ENCODE measurements at regions of chr7 and their contacts with region 1.

Region 1: GRCh38 chr7:23863209-23863798 is 153.3 kb downstream of the STK31 start:
- DNase-seq: peak; percentile 45
- ATAC-seq: peak; percentile 86
- H3K4me3 ChIP-seq: no peak overlapping the region
- H3K27ac ChIP-seq: no peak overlapping the region
- H3K4me1 ChIP-seq: no peaks in the 10 kb centered on the region
- H3K27me3 ChIP-seq: no peaks in the 10 kb centered on the region
- CTCF ChIP-seq: peak; percentile 65 to 82 (median 77); a peak in 5 of 6 replicates
- POLR2A ChIP-seq: no peak
- RAD21 ChIP-seq: peak; percentile 90

Region 2: GRCh38 chr7:23873306-23873705 is 10.0 kb after region 1 on chr7:
- CTCF ChIA-PET with region 1: interaction called, 10 read pairs
- POLR2A ChIA-PET with region 1: no interaction called
- RAD21 ChIA-PET with region 1: no interaction called
- intact Hi-C with region 1: no loop called
- DNase-seq: no peak
- ATAC-seq: no peak
- H3K4me3 ChIP-seq: no peak overlapping the region
- H3K27ac ChIP-seq: no peak overlapping the region
- H3K4me1 ChIP-seq: no peaks in the 10 kb centered on the region
- H3K27me3 ChIP-seq: no peaks in the 10 kb centered on the region
- CTCF ChIP-seq: no peak
- POLR2A ChIP-seq: no peak
- RAD21 ChIP-seq: no peak

Region 3: DNA sequence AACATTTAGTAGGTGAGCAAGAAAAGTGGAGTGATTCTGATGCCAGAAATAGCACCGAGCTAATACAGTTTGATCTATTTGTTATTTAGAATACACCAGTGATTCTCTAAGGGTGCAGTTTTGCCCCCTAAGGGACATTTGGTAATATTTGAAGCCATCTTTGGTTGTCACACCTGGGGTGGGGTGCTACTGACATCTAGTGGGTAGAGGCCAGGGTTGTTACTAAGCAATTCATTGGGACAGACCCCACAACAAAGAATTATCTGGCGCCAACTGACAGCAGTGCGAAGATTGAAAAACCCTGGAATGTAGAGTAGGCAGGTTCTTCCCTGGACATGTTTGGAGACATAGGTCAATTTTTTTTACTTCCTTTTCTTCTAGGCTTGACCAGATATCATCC is 724.5 kb after region 1 on chr7:
- CTCF ChIA-PET with region 1: no interaction called
- POLR2A ChIA-PET with region 1: no interaction called
- RAD21 ChIA-PET with region 1: no interaction called
- intact Hi-C with region 1: loop called (anchors 10 kb)
- DNase-seq: no peak
- ATAC-seq: peak; percentile 85
- H3K4me3 ChIP-seq: no peak overlapping the region
- H3K27ac ChIP-seq: no peak overlapping the region
- H3K4me1 ChIP-seq: no peaks in the 10 kb centered on the region
- H3K27me3 ChIP-seq: no peaks in the 10 kb centered on the region
- CTCF ChIP-seq: peak; percentile 60 to 79 (median 62)
- POLR2A ChIP-seq: no peak
- RAD21 ChIP-seq: peak; percentile 72

Region 4: DNA sequence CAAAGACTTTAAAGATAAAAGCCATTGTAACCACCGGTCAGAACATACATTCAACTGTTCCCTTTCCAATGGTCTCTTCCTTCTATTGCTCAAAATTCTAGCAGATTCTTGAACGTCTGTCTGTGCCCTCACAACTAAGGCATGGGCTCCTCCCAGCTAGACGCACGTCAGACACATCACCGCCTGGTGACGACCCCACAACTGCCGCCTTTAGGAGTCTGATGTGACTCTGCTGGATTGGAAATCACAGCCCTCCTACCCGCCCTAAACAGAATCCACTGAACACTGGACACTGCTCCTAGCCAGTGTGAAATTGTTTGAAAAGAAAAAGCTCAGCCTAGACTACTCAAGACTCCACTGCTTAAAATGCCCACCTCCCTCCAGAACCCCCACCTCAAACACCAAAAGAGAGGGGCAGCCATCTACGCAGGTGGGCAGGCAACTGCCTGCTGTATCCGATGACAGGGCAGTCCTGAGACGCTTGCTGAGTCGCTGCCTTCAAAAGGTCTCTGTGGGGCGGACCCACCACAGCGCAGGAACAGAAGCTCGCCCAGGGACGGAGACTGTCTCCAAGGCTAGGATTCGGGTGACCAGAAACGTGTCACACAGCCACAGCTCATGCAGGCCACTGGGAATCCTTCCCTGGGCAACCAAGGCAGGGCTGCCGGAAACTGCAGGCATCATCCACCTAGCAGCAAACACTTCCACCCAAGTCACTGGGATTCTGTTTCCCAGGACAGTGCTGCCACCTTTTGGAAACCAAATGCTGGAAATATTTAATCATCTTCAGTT is 859.3 kb after region 1 on chr7:
- CTCF ChIA-PET with region 1: no interaction called
- POLR2A ChIA-PET with region 1: no interaction called
- RAD21 ChIA-PET with region 1: no interaction called
- intact Hi-C with region 1: loop called (anchors 2 kb)
- DNase-seq: no peak
- ATAC-seq: peak; percentile 72
- H3K4me3 ChIP-seq: no peak overlapping the region
- H3K27ac ChIP-seq: no peak overlapping the region
- H3K4me1 ChIP-seq: peaks cover 10 to 12% of the 10 kb centered on the region in 2 experiments
- H3K27me3 ChIP-seq: no peaks in the 10 kb centered on the region
- CTCF ChIP-seq: peak; percentile 7 to 47 (median 44); a peak in 3 of 6 replicates
- POLR2A ChIP-seq: no peak
- RAD21 ChIP-seq: peak; percentile 73